K562 (cell line): ENCODE measurements at regions of chr14 and their contacts with region 1.

Region 1: GRCh38 chr14:74501135-74501614 is 7.6 kb downstream of the ISCA2 start:
- DNase-seq: peak; percentile 19 to 60 (median 32)
- ATAC-seq: peak; percentile 89
- H3K4me3 ChIP-seq: no peak overlapping the region
- H3K27ac ChIP-seq: no peak overlapping the region
- H3K4me1 ChIP-seq: peaks cover 0 to 7% of the 10 kb centered on the region in 2 experiments; a peak in 1 of 5 replicates
- H3K27me3 ChIP-seq: peaks cover 0 to 23% of the 10 kb centered on the region in 2 experiments; a peak in 2 of 5 replicates
- CTCF ChIP-seq: peak; percentile 64 to 69 (median 65)
- EP300 ChIP-seq: no peak
- POLR2A ChIP-seq: no peak
- RAD21 ChIP-seq: peak; percentile 7 to 52; a peak in 2 of 4 replicates

Region 2: GRCh38 chr14:74333909-74334308 is 167.3 kb before region 1 on chr14:
- CTCF ChIA-PET with region 1: no interaction called
- POLR2A ChIA-PET with region 1: no interaction called
- in situ Hi-C with region 1: no loop called
- intact Hi-C with region 1: no loop called
- DNase-seq: no peak
- ATAC-seq: no peak
- H3K4me3 ChIP-seq: no peak overlapping the region
- H3K27ac ChIP-seq: no peak overlapping the region
- H3K4me1 ChIP-seq: no peaks in the 10 kb centered on the region; a peak in 1 of 5 replicates
- H3K27me3 ChIP-seq: peaks cover 5 to 14% of the 10 kb centered on the region in 2 experiments; a peak in 2 of 5 replicates
- CTCF ChIP-seq: no peak
- EP300 ChIP-seq: no peak
- POLR2A ChIP-seq: no peak
- RAD21 ChIP-seq: no peak

Region 3: DNA sequence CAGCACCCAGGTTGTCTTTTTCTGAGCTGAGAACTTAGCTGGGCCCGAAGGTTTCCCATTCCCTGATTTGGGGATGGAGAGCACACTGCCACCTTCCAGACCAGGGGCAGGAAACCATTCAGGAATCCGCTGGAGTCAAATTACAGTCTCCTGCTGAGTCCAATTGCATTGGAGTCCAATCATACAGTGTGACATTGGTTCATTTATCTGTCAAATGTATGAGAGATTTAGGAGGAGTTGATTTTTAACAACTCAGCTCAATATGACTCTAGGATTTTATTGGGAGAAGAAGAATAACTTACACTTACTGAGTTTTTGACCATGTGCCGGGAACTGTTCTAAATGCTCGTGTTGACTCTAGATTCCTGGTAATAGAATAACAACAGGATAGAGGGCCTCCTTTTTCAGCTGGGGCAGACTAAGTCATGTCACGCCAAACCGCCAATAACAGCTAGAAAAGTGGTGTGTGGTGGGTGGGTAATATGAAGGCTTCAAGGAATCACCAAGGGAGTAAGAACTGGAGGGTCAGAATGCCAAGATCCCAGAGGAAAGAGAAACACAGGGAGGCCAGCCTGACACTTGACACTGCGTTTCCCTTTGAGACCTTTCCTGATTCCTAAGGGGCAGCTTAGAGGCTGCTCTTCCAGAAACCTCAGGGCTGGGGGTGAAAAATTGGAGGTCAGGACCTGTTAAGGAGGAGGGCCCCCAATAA is 86.6 kb before region 1 on chr14:
- CTCF ChIA-PET with region 1: no interaction called
- POLR2A ChIA-PET with region 1: no interaction called
- in situ Hi-C with region 1: no loop called
- intact Hi-C with region 1: no loop called
- DNase-seq: no peak
- ATAC-seq: no peak
- H3K4me3 ChIP-seq: no peak overlapping the region
- H3K27ac ChIP-seq: no peak overlapping the region
- H3K4me1 ChIP-seq: no peaks in the 10 kb centered on the region
- H3K27me3 ChIP-seq: peaks cover 0 to 11% of the 10 kb centered on the region in 2 experiments; a peak in 3 of 5 replicates
- CTCF ChIP-seq: no peak
- EP300 ChIP-seq: no peak
- POLR2A ChIP-seq: no peak
- RAD21 ChIP-seq: no peak

Region 4: GRCh38 chr14:74804219-74804826 is 303.1 kb after region 1 on chr14:
- CTCF ChIA-PET with region 1: interaction called, 4 read pairs
- POLR2A ChIA-PET with region 1: no interaction called
- in situ Hi-C with region 1: no loop called
- intact Hi-C with region 1: loop called (anchors 5 kb)
- DNase-seq: peak in 3 of 4 experiments; percentile 17 to 45 (median 19)
- ATAC-seq: peak; percentile 73
- H3K4me3 ChIP-seq: no peak overlapping the region
- H3K27ac ChIP-seq: no peak overlapping the region
- H3K4me1 ChIP-seq: peaks cover 0 to 2% of the 10 kb centered on the region in 2 experiments; a peak in 1 of 5 replicates
- H3K27me3 ChIP-seq: no peaks in the 10 kb centered on the region
- CTCF ChIP-seq: peak; percentile 52 to 66 (median 58)
- EP300 ChIP-seq: no peak
- POLR2A ChIP-seq: no peak
- RAD21 ChIP-seq: peak; percentile 49 to 74